ENCODE measurements at regions of chr14 and their contacts with region 1.

Region 1: DNA sequence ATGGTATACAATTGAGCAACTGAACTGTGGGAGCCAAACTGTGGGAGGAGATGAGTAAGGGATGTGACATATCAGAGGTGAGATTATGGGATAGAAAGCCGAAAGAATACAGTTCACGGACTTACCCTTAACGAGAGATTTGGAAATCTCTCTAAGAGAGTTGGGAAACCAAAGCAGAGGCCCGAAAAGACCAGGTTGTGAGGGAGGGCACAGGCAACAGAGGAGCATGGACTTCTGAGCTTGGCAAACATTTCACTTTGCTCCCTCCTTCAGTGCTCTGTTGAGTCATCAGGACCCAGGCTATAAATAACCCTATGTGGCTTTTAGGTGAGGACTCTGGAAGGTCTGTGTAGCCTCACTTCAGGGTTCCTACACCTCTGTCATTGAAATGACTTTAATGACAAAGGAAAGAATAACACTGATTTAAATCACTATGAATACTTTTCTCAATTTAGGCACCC is 120.6 kb downstream of the TGFB3 start:
- DNase-seq: peak; percentile 66
- H3K4me3 ChIP-seq: no peak overlapping the region
- H3K27ac ChIP-seq: peak overlapping the region in 3 of 4 donors; percentile 66 to 72 (median 69)
- H3K4me1 ChIP-seq: peaks cover 0 to 46% (median 39%) of the 10 kb centered on the region in 4 donors
- H3K27me3 ChIP-seq: no peaks in the 10 kb centered on the region
- CTCF ChIP-seq: no peak
- EP300 ChIP-seq: no peak
- POLR2A ChIP-seq: no peak

Region 2: DNA sequence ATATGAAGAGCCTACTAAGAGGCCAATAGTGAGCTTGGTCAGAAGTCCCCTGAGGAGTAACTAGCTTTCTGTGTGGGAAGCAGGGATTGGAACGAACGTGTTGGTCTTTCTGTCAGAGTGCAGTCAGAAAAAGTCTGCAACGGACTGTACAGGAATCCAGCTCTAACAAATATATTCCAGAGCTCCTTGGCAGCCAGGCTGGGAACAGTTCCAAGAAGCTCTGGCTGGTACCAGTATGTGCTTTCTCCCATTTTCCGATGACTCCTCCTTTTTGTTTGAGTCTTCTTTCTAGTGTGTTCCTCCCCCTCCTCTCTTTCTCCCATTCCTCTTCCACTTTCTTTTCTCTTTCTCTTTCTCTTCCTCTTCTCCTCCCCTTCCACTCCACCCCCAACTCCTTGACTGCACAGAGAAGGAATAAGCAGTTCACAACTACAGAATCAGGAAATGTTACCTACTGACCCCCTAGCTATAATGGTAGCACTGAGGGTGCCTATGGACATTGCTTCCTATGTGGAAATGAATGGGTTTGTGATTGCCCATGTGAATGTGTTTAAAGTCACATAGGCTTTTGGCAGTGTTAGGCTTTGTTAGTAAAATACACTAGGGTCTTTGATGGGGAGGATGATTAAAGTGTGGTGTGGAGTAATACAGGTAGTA is 140.2 kb before region 1 on chr14:
- intact Hi-C with region 1: loop called (anchors 5 kb)
- DNase-seq: peak; percentile 85
- H3K4me3 ChIP-seq: peak overlapping the region in 3 of 4 donors; percentile 17 to 27 (median 19)
- H3K27ac ChIP-seq: peak overlapping the region; percentile 65 to 88 (median 80)
- H3K4me1 ChIP-seq: peaks cover 0 to 74% (median 60%) of the 10 kb centered on the region in 4 donors
- H3K27me3 ChIP-seq: no peaks in the 10 kb centered on the region
- CTCF ChIP-seq: no peak
- EP300 ChIP-seq: no peak
- POLR2A ChIP-seq: no peak

Region 3: DNA sequence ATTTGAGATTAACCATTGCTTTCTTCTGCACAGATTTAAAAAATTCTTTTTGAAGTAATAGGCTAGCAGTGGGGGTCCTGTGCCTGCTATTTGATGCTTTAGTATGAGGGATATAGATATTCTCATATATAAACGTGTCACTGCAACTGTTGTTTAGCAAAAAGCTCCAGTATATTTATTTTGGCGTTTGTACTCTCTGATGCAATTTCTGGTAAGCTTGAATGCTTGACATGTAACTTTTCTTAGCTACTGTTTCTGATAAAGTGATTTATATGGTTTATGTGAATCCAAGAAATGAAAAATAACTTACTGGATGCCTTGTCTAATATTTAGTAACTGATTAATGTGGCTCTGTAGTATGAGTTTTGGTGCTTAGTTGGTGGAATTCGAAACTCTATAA is 123.0 kb before region 1 on chr14:
- intact Hi-C with region 1: no loop called
- DNase-seq: no peak
- H3K4me3 ChIP-seq: no peak overlapping the region
- H3K27ac ChIP-seq: no peak overlapping the region
- H3K4me1 ChIP-seq: no peaks in the 10 kb centered on the region
- H3K27me3 ChIP-seq: no peaks in the 10 kb centered on the region
- CTCF ChIP-seq: no peak
- EP300 ChIP-seq: no peak
- POLR2A ChIP-seq: no peak

Region 4: GRCh38 chr14:75769047-75769685 is 92.0 kb before region 1 on chr14:
- intact Hi-C with region 1: no loop called
- DNase-seq: no peak
- H3K4me3 ChIP-seq: no peak overlapping the region
- H3K27ac ChIP-seq: peak overlapping the region in 1 of 4 donors; percentile 39
- H3K4me1 ChIP-seq: peaks cover 0 to 18% (median 14%) of the 10 kb centered on the region in 4 donors
- H3K27me3 ChIP-seq: no peaks in the 10 kb centered on the region
- CTCF ChIP-seq: no peak
- EP300 ChIP-seq: no peak
- POLR2A ChIP-seq: no peak

Region 5: DNA sequence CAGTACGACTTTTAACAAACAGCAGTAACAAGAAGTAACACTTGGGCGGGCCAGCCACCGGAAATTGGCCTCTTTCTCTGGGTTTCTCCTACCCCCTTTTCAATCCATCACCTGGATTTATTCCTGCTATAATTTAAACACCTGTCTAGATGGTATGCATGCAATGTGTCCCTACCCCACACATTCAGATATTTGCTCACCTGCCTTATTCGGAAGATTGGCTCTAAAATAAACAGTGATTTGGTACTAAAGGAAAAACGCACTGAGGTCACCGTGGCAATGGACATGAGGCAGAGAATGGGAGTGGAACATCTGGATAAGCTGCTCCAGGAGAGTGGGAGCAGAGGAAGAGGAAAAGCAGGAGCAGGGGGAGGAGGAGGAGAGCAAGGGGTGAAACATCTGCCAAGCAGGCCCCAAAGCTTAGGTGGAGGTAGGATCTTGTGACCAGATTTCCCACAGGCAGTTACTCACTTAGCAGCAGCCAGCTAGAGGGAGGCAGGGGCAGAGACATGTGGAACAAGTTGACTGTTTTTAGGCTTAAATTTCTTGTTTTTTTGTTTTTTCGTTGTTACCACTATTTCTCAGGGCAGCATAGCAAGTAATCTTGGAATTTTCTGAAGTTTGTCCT is 49.2 kb before region 1 on chr14:
- intact Hi-C with region 1: no loop called
- DNase-seq: no peak
- H3K4me3 ChIP-seq: no peak overlapping the region
- H3K27ac ChIP-seq: no peak overlapping the region
- H3K4me1 ChIP-seq: no peaks in the 10 kb centered on the region
- H3K27me3 ChIP-seq: no peaks in the 10 kb centered on the region
- CTCF ChIP-seq: no peak
- EP300 ChIP-seq: no peak
- POLR2A ChIP-seq: no peak

Region 6: GRCh38 chr14:75822522-75823141 is 38.6 kb before region 1 on chr14:
- intact Hi-C with region 1: loop called (anchors 5 kb)
- DNase-seq: peak; percentile 69
- H3K4me3 ChIP-seq: no peak overlapping the region
- H3K27ac ChIP-seq: peak overlapping the region; percentile 51 to 84 (median 72)
- H3K4me1 ChIP-seq: peaks cover 0 to 56% (median 46%) of the 10 kb centered on the region in 4 donors
- H3K27me3 ChIP-seq: no peaks in the 10 kb centered on the region
- CTCF ChIP-seq: no peak
- EP300 ChIP-seq: no peak
- POLR2A ChIP-seq: no peak

Region 7: GRCh38 chr14:76282581-76282980 is 421.4 kb after region 1 on chr14:
- intact Hi-C with region 1: no loop called
- DNase-seq: no peak
- H3K4me3 ChIP-seq: no peak overlapping the region
- H3K27ac ChIP-seq: no peak overlapping the region
- H3K4me1 ChIP-seq: no peaks in the 10 kb centered on the region
- H3K27me3 ChIP-seq: no peaks in the 10 kb centered on the region
- CTCF ChIP-seq: no peak
- EP300 ChIP-seq: no peak
- POLR2A ChIP-seq: no peak